Activated B cell treated with CpG ODN at 0.5 μM for 24 hours (primary cell): ENCODE measurements at regions of chr12 and their contacts with region 1.

Region 1: GRCh38 chr12:71710276-71711125 is 24.6 kb downstream of the TMEM19 start:
- DNase-seq: no peak
- ATAC-seq: peak; percentile 28
- H3K4me3 Mint-ChIP-seq: no peak overlapping the region
- H3K27ac Mint-ChIP-seq: no peak overlapping the region
- H3K4me1 Mint-ChIP-seq: peaks cover 25% of the 10 kb centered on the region
- H3K27me3 Mint-ChIP-seq: no peaks in the 10 kb centered on the region
- CTCF ChIP-seq: no peak

Region 2: GRCh38 chr12:70319605-70320004 is 1390.9 kb before region 1 on chr12:
- CTCF ChIA-PET with region 1: no interaction called
- POLR2A ChIA-PET with region 1: no interaction called
- intact Hi-C with region 1: no loop called
- DNase-seq: no peak
- ATAC-seq: no peak
- H3K4me3 Mint-ChIP-seq: no peak overlapping the region
- H3K27ac Mint-ChIP-seq: no peak overlapping the region
- H3K4me1 Mint-ChIP-seq: peaks cover 32% of the 10 kb centered on the region
- H3K27me3 Mint-ChIP-seq: no peaks in the 10 kb centered on the region
- CTCF ChIP-seq: no peak

Region 3: GRCh38 chr12:71655495-71655894 is 55.0 kb before region 1 on chr12:
- CTCF ChIA-PET with region 1: no interaction called
- POLR2A ChIA-PET with region 1: no interaction called
- intact Hi-C with region 1: no loop called
- DNase-seq: no peak
- ATAC-seq: no peak
- H3K4me3 Mint-ChIP-seq: no peak overlapping the region
- H3K27ac Mint-ChIP-seq: no peak overlapping the region
- H3K4me1 Mint-ChIP-seq: peaks cover 39% of the 10 kb centered on the region
- H3K27me3 Mint-ChIP-seq: no peaks in the 10 kb centered on the region
- CTCF ChIP-seq: no peak

Region 4: DNA sequence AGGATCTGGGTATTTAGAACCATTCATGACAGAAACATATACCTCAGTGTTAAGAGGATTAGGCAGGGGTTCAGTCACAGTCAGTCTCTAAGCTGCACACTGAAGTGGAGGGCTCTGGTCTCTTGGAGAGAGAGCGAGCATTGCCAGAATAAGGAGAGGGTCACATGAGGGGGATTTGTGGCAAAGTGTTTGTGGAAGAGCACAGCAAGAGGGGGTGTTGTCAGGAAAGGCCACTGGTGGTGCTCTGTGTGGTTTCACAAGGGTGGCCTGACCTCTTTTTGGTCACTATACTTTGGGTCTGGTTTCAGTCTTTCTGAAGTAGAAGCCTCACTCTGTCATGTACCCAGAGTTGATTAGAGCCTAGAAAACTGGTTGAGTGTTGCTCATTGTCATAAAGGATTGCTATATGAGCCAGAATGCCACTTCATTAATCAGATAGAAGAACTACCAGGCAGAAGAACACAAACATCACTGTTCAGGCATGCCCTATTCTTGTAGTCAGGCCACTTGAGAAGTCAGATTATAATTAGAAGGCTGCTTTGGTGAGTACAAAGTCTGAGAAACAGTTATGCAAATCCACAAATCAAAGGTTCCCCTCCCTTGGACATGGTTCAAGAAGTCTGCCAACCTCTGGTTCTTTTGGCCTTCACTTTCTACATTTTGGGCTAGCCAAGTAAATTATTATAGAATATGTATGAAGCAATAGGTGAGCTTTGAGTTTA is 16.2 kb before region 1 on chr12:
- CTCF ChIA-PET with region 1: no interaction called
- POLR2A ChIA-PET with region 1: interaction called, 7 read pairs
- intact Hi-C with region 1: loop called (anchors 2 kb)
- DNase-seq: no peak
- ATAC-seq: peak; percentile 83
- H3K4me3 Mint-ChIP-seq: peak overlapping the region; percentile 76
- H3K27ac Mint-ChIP-seq: peak overlapping the region; percentile 97
- H3K4me1 Mint-ChIP-seq: peaks cover 77% of the 10 kb centered on the region
- H3K27me3 Mint-ChIP-seq: no peaks in the 10 kb centered on the region
- CTCF ChIP-seq: no peak

Region 5: DNA sequence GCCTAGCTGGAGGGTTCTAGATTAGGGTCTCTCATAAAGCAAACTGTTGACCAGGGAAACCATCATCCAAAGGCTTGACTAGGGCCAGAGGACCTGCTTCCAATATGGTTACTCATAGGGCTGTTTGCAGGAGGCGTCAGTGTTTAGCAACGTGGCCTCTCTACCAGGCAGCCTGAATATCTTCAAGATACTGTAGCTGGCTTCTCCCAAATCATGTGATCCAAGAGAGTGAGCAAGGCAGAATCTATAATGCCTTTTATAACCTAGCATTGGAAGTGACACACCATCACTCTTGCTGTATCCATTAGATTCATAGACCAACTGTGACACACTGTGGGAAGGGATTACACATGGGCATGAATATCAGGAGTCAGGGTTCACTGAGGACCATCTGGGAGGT is 245.5 kb after region 1 on chr12:
- CTCF ChIA-PET with region 1: no interaction called
- POLR2A ChIA-PET with region 1: no interaction called
- intact Hi-C with region 1: no loop called
- DNase-seq: no peak
- ATAC-seq: no peak
- H3K4me3 Mint-ChIP-seq: no peak overlapping the region
- H3K27ac Mint-ChIP-seq: no peak overlapping the region
- H3K4me1 Mint-ChIP-seq: no peaks in the 10 kb centered on the region
- H3K27me3 Mint-ChIP-seq: peaks cover 13% of the 10 kb centered on the region
- CTCF ChIP-seq: no peak